CD8-positive, alpha-beta T cell (primary cell): ENCODE measurements at regions of chr5 and their contacts with region 1.

Region 1: GRCh38 chr5:148383564-148384379 is at the start of gene FBXO38:
- DNase-seq: peak; percentile 94 to 99 (median 97)
- ATAC-seq: peak; percentile 95
- H3K4me3 ChIP-seq: peak within 1 kb of the TSS; percentile 77 to 83
- H3K4me3 Mint-ChIP-seq: peak within 1 kb of the TSS; percentile 87
- H3K27ac ChIP-seq: peak within 1 kb of the TSS; percentile 97
- H3K27ac Mint-ChIP-seq: peak within 1 kb of the TSS; percentile 96
- H3K4me1 ChIP-seq: peaks cover 38% of the 10 kb centered on the region
- H3K4me1 Mint-ChIP-seq: peaks cover 68% of the 10 kb centered on the region
- H3K27me3 ChIP-seq: no peaks in the 10 kb centered on the region
- H3K27me3 Mint-ChIP-seq: no peaks in the 10 kb centered on the region
- CTCF ChIP-seq: no peak
- total RNA-seq, gene FBXO38: 45.5 to 48.7 TPM

Region 2: GRCh38 chr5:147782110-147783028 is 601.4 kb before region 1 on chr5 and contains the start of gene JAKMIP2:
- CTCF ChIA-PET with region 1: no interaction called
- POLR2A ChIA-PET with region 1: no interaction called
- intact Hi-C with region 1: loop called (anchors 1 to 10 kb)
- DNase-seq: peak; percentile 70 to 92 (median 85)
- ATAC-seq: peak; percentile 96
- H3K4me3 ChIP-seq: peak within 1 kb of the TSS; percentile 51 to 60
- H3K4me3 Mint-ChIP-seq: peak within 1 kb of the TSS; percentile 84
- H3K27ac ChIP-seq: peak within 1 kb of the TSS; percentile 46 to 77
- H3K27ac Mint-ChIP-seq: peak within 1 kb of the TSS; percentile 92
- H3K4me1 ChIP-seq: peaks cover 11% of the 10 kb centered on the region
- H3K4me1 Mint-ChIP-seq: peaks cover 31% of the 10 kb centered on the region
- H3K27me3 ChIP-seq: no peaks in the 10 kb centered on the region
- H3K27me3 Mint-ChIP-seq: no peaks in the 10 kb centered on the region
- CTCF ChIP-seq: no peak
- total RNA-seq, gene JAKMIP2: 1.1 to 2.0 TPM

Region 3: DNA sequence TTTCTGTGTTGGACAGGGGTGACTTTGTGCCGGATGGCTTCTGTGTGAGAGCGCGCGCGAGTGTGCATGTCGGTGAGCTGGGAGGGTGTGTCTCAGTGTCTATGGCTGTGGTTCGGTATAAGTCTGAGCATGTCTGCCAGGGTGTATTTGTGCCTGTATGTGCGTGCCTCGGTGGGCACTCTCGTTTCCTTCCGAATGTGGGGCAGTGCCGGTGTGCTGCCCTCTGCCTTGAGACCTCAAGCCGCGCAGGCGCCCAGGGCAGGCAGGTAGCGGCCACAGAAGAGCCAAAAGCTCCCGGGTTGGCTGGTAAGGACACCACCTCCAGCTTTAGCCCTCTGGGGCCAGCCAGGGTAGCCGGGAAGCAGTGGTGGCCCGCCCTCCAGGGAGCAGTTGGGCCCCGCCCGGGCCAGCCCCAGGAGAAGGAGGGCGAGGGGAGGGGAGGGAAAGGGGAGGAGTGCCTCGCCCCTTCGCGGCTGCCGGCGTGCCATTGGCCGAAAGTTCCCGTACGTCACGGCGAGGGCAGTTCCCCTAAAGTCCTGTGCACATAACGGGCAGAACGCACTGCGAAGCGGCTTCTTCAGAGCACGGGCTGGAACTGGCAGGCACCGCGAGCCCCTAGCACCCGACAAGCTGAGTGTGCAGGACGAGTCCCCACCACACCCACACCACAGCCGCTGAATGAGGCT is 442.4 kb after region 1 on chr5 and contains the start of gene ADRB2:
- CTCF ChIA-PET with region 1: no interaction called
- POLR2A ChIA-PET with region 1: no interaction called
- intact Hi-C with region 1: loop called (anchors 5 kb)
- DNase-seq: peak; percentile 78 to 96 (median 86)
- ATAC-seq: peak; percentile 88
- H3K4me3 ChIP-seq: peak within 1 kb of the TSS; percentile 62 to 73
- H3K4me3 Mint-ChIP-seq: peak within 1 kb of the TSS; percentile 89
- H3K27ac ChIP-seq: peak within 1 kb of the TSS; percentile 57 to 75
- H3K27ac Mint-ChIP-seq: peak within 1 kb of the TSS; percentile 87
- H3K4me1 ChIP-seq: peaks cover 11% of the 10 kb centered on the region
- H3K4me1 Mint-ChIP-seq: peaks cover 53% of the 10 kb centered on the region
- H3K27me3 ChIP-seq: no peaks in the 10 kb centered on the region
- H3K27me3 Mint-ChIP-seq: no peaks in the 10 kb centered on the region
- CTCF ChIP-seq: no peak
- total RNA-seq, gene ADRB2: 7.6 to 8.8 TPM

Region 4: GRCh38 chr5:149345147-149345875 is 961.5 kb after region 1 on chr5 and contains the start of gene GRPEL2:
- CTCF ChIA-PET with region 1: no interaction called
- POLR2A ChIA-PET with region 1: no interaction called
- intact Hi-C with region 1: loop called in 1 of 2 experiments (anchors 5 kb)
- DNase-seq: peak; percentile 65 to 93 (median 84)
- ATAC-seq: peak; percentile 65
- H3K4me3 ChIP-seq: peak within 1 kb of the TSS; percentile 94 to 95
- H3K4me3 Mint-ChIP-seq: peak within 1 kb of the TSS; percentile 92
- H3K27ac ChIP-seq: peak within 1 kb of the TSS; percentile 63 to 88
- H3K27ac Mint-ChIP-seq: peak within 1 kb of the TSS; percentile 90
- H3K4me1 ChIP-seq: peaks cover 53% of the 10 kb centered on the region
- H3K4me1 Mint-ChIP-seq: peaks cover 60% of the 10 kb centered on the region
- H3K27me3 ChIP-seq: no peaks in the 10 kb centered on the region
- H3K27me3 Mint-ChIP-seq: no peaks in the 10 kb centered on the region
- CTCF ChIP-seq: no peak
- total RNA-seq, gene GRPEL2: 9.1 to 9.7 TPM

Region 5: GRCh38 chr5:149551200-149552037 is 1167.6 kb after region 1 on chr5 and contains the start of gene CSNK1A1:
- CTCF ChIA-PET with region 1: interaction called, 3 read pairs
- POLR2A ChIA-PET with region 1: no interaction called
- intact Hi-C with region 1: loop called (anchors 5 to 10 kb)
- DNase-seq: peak; percentile 98 to 100 (median 99)
- ATAC-seq: peak; percentile 85
- H3K4me3 ChIP-seq: peak within 1 kb of the TSS; percentile 90 to 94
- H3K4me3 Mint-ChIP-seq: peak within 1 kb of the TSS; percentile 97
- H3K27ac ChIP-seq: peak within 1 kb of the TSS; percentile 88 to 92
- H3K27ac Mint-ChIP-seq: peak within 1 kb of the TSS; percentile 95
- H3K4me1 ChIP-seq: peaks cover 27% of the 10 kb centered on the region
- H3K4me1 Mint-ChIP-seq: peaks cover 30% of the 10 kb centered on the region
- H3K27me3 ChIP-seq: no peaks in the 10 kb centered on the region
- H3K27me3 Mint-ChIP-seq: no peaks in the 10 kb centered on the region
- CTCF ChIP-seq: peak; percentile 62
- total RNA-seq, gene CSNK1A1: 213 to 221 TPM

Region 6: GRCh38 chr5:149960272-149961185 is 1576.8 kb after region 1 on chr5 and contains the start of gene SLC26A2:
- CTCF ChIA-PET with region 1: no interaction called
- POLR2A ChIA-PET with region 1: no interaction called
- intact Hi-C with region 1: loop called in 1 of 2 experiments (anchors 5 kb)
- DNase-seq: peak; percentile 83 to 97 (median 93)
- ATAC-seq: peak; percentile 95
- H3K4me3 ChIP-seq: peak within 1 kb of the TSS; percentile 85 to 99
- H3K4me3 Mint-ChIP-seq: peak within 1 kb of the TSS; percentile 97
- H3K27ac ChIP-seq: peak within 1 kb of the TSS; percentile 66 to 77
- H3K27ac Mint-ChIP-seq: peak within 1 kb of the TSS; percentile 97
- H3K4me1 ChIP-seq: peaks cover 26% of the 10 kb centered on the region
- H3K4me1 Mint-ChIP-seq: peaks cover 39% of the 10 kb centered on the region
- H3K27me3 ChIP-seq: no peaks in the 10 kb centered on the region
- H3K27me3 Mint-ChIP-seq: no peaks in the 10 kb centered on the region
- CTCF ChIP-seq: no peak
- total RNA-seq, gene SLC26A2: 2.0 to 2.2 TPM